Spleen (tissue), 13 donors: ENCODE measurements at regions of chr19 and their contacts with region 1.

Region 1: DNA sequence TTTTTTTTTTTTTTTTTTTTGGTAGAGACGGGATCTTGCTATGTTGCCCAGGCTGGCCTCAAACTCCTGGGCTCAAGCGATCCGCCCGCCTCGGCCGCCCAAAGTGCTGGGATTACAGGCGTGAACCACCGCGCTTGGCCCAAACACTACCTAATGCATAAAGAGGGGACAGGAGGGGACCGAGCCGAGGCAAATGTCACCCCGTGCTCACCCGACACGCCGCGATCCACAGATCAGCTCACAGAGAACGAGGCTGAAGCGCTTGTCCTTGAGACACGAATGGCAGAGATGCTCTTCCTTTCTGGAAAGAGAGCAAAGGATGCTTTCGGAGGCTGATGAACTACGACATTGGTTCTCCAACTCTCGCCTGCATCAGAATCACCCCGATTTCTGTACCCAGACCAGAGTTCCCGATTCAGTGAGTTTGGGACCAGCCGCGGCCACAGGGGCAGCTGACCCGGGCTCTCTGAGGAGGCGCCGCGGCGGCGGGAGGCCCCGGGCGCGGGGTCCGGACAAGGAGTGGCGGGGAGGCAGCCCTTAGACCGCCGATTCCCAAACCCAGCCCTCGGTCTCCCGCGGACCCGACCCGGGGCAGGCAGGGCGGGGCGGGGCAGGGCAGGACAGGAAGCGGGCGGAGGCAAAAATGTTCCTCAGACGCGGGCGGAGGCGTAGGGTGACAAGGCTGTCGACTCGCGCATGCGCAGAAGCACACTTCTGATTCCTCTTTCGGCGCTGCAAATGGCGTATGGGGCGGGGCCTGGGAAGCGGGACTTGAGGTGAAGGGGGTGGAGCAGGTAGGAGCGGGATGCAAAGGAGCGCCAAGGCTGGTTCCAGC is at the start of gene ZNF699:
- DNase-seq: peak; percentile 99
- H3K4me3 ChIP-seq: peak within 1 kb of the TSS; percentile 46 to 88 (median 72)
- H3K27ac ChIP-seq: peak within 1 kb of the TSS; percentile 93 to 99 (median 98)
- H3K4me1 ChIP-seq: peaks cover 9 to 35% (median 25%) of the 10 kb centered on the region in 6 donors
- H3K27me3 ChIP-seq: no peaks in the 10 kb centered on the region
- CTCF ChIP-seq: peak in 1 of 11 experiments; percentile 17
- POLR2A ChIP-seq: peak in 2 of 3 donors; percentile 35 to 46
- total RNA-seq, gene ZNF699: 7.7 to 16.2 (median 10.6) TPM

Region 2: DNA sequence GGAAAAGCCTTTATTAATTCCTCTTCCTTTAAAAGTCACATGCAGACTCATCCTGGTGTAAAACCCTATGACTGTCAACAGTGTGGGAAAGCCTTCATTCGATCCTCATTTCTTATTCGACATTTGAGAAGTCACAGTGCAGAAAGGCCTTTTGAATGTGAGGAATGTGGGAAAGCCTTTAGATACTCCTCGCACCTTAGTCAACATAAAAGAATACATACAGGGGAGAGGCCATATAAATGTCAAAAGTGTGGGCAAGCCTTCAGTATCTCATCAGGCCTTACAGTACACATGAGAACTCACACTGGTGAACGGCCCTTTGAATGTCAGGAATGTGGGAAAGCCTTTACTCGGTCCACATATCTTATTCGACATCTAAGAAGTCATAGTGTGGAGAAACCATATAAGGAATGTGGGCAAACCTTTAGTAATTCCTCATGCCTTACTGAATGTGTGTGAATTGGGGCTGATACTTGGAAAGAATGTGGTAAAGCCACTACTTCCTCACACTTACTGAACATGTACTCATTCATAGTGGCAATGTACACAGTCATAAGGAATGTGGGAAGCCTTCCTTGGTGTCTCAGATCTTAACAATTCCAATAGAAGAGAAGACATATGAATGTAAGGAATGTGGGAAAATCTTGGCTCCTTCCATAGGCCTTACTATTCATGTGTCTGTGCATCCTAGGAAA is 33.4 kb after region 1 on chr19:
- intact Hi-C with region 1: no loop called
- DNase-seq: no peak
- H3K4me3 ChIP-seq: peak overlapping the region in 1 of 8 donors; percentile 20
- H3K27ac ChIP-seq: no peak overlapping the region
- H3K4me1 ChIP-seq: no peaks in the 10 kb centered on the region
- H3K27me3 ChIP-seq: no peaks in the 10 kb centered on the region
- CTCF ChIP-seq: no peak
- POLR2A ChIP-seq: no peak

Region 3: GRCh38 chr19:9435279-9436268 is 126.2 kb after region 1 on chr19 and contains the start of gene ZNF266:
- intact Hi-C with region 1: loop called (anchors 10 kb)
- DNase-seq: peak; percentile 95
- H3K4me3 ChIP-seq: peak within 1 kb of the TSS; percentile 64 to 82 (median 68)
- H3K27ac ChIP-seq: peak within 1 kb of the TSS; percentile 91 to 97 (median 94)
- H3K4me1 ChIP-seq: peaks cover 11 to 54% (median 30%) of the 10 kb centered on the region in 6 donors
- H3K27me3 ChIP-seq: no peaks in the 10 kb centered on the region
- CTCF ChIP-seq: peak; percentile 85 to 98 (median 93)
- POLR2A ChIP-seq: no peak
- total RNA-seq, gene ZNF266: 26.0 to 73.0 (median 42.9) TPM

Region 4: GRCh38 chr19:9584073-9584833 is 274.9 kb after region 1 on chr19 and contains the start of gene ZNF121:
- intact Hi-C with region 1: loop called (anchors 10 kb)
- DNase-seq: peak; percentile 94
- H3K4me3 ChIP-seq: peak within 1 kb of the TSS; percentile 68 to 92 (median 85)
- H3K27ac ChIP-seq: peak within 1 kb of the TSS; percentile 87 to 96 (median 92)
- H3K4me1 ChIP-seq: peaks cover 19 to 53% (median 28%) of the 10 kb centered on the region in 6 donors
- H3K27me3 ChIP-seq: peaks cover 0 to 14% (median 0%) of the 10 kb centered on the region in 7 donors
- CTCF ChIP-seq: peak in 1 of 11 experiments; percentile 5
- POLR2A ChIP-seq: no peak
- total RNA-seq, gene ZNF121: 27.7 to 44.8 (median 35.0) TPM